Cardiac septum (tissue), 1 donor: ENCODE measurements at regions of chr13 and their contacts with region 1.

Region 1: DNA sequence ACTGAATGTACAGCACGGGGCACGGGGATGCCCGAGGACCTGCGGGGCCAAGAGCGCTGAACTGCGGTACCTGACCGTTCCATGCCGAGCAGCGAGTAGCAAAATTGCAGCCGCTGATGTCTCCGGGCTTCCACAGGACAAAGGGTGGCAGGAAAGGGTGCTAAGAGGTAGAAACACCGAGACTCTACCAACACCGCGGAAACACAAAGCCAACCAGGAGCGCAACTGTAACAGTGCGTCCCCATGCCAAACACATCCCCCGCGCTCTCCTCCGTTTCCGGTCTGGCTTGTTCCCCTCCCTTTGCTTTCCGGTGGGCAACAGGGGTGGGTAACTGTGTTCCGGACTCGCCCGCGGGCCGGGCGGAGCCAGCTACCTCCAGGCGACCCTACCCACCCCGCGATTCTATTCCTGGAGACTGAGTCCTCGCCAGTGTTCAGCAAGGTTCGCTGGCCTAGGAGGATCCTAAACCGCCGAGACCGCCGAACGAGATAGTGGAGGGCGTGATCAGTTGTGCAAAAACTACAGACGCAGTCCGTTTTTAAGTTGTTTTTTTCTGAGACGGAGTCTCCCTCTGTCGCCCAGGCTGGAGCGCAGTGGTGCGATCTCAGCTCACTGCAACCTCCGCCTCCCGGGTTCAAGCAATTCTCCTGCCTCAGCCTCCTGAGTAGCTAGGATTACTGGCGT is 34.9 kb upstream of the NEK3 start:
- DNase-seq: peak; percentile 93

Region 2: DNA sequence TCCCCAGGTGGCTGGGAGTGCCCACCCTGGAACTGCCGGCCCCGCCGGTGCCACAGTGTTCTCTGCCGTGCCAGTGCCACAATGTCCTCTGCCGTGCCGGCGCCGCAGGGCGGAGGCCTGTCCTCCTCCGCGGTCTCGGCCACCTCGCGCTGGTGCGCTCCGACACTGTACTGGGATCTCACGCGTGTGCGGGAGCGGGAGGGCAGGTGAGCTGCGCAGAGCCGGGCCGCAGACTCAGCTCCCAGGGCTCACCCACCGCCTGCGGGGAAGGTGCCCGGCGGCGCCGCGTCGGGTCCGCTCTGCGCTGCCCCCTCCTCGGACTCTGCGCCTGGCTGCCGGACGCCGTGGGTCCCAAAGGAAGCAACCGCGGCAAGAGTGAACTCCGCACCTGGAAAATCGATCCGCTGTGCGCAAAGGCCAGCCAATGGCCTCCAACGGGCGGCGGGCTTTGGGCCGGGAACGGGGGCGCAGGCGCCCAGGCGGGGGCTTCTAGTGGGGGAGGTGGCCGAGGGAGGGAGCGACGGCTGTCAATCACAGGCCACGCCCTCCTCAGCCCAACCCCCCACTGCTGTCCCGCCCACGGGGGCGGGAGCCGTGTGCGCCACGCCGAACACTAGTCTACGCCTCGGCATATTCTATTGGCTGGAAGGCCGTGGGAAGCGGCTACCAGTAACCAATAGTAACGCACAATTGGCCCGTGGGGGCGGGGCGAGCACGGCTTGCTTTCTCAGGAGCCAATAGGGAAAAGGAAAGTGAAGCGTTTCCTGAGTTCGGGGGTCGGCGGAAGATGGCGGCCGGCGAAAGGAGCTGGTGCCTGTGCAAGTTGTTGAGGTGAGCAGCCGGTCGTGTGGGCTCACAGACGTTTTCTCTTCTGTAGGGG is 182.5 kb before region 1 on chr13 and contains the start of gene ALG11:
- intact Hi-C with region 1: loop called (anchors 10 kb)
- DNase-seq: peak; percentile 100
- total RNA-seq, gene ALG11: 23.6 TPM

Region 3: GRCh38 chr13:52034616-52035226 is 159.6 kb before region 1 on chr13:
- intact Hi-C with region 1: no loop called
- DNase-seq: no peak

Region 4: GRCh38 chr13:52061587-52061986 is 132.7 kb before region 1 on chr13:
- intact Hi-C with region 1: loop called (anchors 5 kb)
- DNase-seq: no peak